ENCODE measurements at regions of chr10 and their contacts with region 1.

Region 1: GRCh38 chr10:17504547-17505245 is 50.3 kb upstream of the ST8SIA6 start:
- DNase-seq: no peak
- H3K4me3 ChIP-seq: no peak overlapping the region
- H3K27ac ChIP-seq: no peak overlapping the region
- H3K4me1 ChIP-seq: no peaks in the 10 kb centered on the region
- H3K27me3 ChIP-seq: no peaks in the 10 kb centered on the region
- CTCF ChIP-seq: no peak

Region 2: GRCh38 chr10:17454161-17455014 is 50.3 kb before region 1 on chr10 and contains the start of gene ST8SIA6:
- CTCF ChIA-PET with region 1: no interaction called
- dilution Hi-C with region 1: no loop called
- in situ Hi-C with region 1: no loop called
- intact Hi-C with region 1: loop called (anchors 5 kb)
- DNase-seq: peak; percentile 42
- H3K4me3 ChIP-seq: peak within 1 kb of the TSS; percentile 37 to 51 (median 47)
- H3K27ac ChIP-seq: no peak within 1 kb of the TSS
- H3K4me1 ChIP-seq: peaks cover 6% of the 10 kb centered on the region
- H3K27me3 ChIP-seq: peaks cover 5% of the 10 kb centered on the region
- CTCF ChIP-seq: no peak
- total RNA-seq, gene ST8SIA6: 0.17 TPM in 1 of 2 donors, not detected in the other

Region 3: DNA sequence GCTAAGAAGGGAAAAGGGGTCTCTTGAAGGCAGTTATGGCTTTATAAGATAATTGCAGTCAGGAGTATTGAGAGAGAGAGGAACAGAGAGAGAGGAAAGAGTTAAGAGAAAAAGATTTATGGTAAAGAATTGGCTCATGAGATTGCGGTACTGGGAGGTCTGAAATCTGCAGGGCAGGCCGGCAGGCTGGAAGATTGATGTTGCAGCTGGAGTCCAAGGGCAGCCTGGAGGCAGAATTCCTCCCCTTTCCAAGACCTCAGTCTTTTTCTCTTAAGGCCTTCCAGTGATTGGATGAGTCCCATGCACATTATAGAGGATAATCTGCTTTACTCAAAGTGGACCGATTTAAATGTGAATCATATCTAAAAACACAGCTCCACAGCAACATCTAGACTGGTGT is 44.1 kb after region 1 on chr10:
- CTCF ChIA-PET with region 1: no interaction called
- dilution Hi-C with region 1: loop called (anchors 5 kb)
- in situ Hi-C with region 1: no loop called
- intact Hi-C with region 1: no loop called
- DNase-seq: no peak
- H3K4me3 ChIP-seq: no peak overlapping the region
- H3K27ac ChIP-seq: no peak overlapping the region
- H3K4me1 ChIP-seq: no peaks in the 10 kb centered on the region
- H3K27me3 ChIP-seq: no peaks in the 10 kb centered on the region
- CTCF ChIP-seq: no peak

Measured in mammary epithelial cell (primary cell).